Activated T-helper 1 cell treated with anti-CD3 and anti-CD28 coated beads, Interleukin-12 subunit alpha, Interleukin-12 subunit beta, Interleukin-2, Interleukin-4 antibody, amounts not matched to agents 30 ng/mL and 10 ng/mL and 1 ng/mL, durations not matched to agents 14 hours and 24 hours and 36 hours (primary cell): ENCODE measurements at regions of chr5 and their contacts with region 1.

Region 1: DNA sequence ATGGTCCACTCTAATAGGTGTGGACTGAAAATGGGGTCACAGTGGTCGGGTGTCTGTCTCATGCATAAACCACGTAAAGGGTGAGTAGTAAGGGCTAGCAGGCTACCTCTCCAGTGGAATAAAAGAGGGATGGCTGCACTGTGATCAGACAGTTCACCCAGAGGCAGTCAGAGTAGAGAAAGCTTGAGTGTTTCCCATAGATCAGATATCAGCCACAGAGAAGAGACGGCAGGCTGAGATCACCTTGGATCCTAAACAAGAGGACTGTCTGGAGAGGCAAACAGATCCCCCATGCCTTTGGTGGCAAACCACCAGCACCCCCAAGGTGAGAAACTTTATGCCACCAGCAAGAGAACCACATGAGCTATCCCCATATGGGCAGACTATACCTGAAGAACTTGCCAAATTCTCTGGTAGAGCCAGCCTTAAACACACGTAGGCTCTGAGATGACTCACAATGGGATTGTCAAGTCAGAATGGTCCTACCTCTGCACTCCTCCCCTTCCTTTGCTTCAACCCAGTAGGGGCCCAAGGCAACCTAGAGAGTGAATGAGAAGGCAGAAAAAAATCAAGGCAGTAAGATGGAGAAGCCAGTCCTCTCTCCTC is 205.2 kb upstream of the MAP3K1 start:
- DNase-seq: peak; percentile 49
- H3K4me3 Mint-ChIP-seq: peak overlapping the region; percentile 48
- H3K27ac Mint-ChIP-seq: peak overlapping the region; percentile 81
- H3K4me1 Mint-ChIP-seq: peaks cover 89% of the 10 kb centered on the region
- H3K27me3 Mint-ChIP-seq: peaks cover 3% of the 10 kb centered on the region

Region 2: DNA sequence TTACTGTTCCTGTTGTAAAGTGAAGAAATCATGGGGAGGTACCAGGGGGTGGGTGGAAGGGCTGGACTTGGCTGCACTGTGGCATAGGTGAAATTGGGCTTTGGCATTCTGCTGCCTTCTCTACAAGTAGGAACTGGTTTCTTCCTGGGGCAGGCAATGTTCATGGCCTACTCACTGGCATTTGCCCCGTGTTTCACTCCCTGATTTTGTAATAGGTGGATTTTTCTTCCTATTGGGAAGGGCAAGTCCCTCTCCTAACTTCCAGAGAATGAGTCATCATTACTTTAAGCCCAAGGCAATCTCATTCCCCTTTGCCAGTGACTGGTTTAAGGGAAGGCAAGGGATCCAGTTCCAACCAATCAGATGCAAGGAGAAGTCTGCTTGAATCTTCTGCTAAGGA is 309.2 kb before region 1 on chr5:
- intact Hi-C with region 1: no loop called
- DNase-seq: no peak
- H3K4me3 Mint-ChIP-seq: no peak overlapping the region
- H3K27ac Mint-ChIP-seq: no peak overlapping the region
- H3K4me1 Mint-ChIP-seq: no peaks in the 10 kb centered on the region
- H3K27me3 Mint-ChIP-seq: no peaks in the 10 kb centered on the region

Region 3: DNA sequence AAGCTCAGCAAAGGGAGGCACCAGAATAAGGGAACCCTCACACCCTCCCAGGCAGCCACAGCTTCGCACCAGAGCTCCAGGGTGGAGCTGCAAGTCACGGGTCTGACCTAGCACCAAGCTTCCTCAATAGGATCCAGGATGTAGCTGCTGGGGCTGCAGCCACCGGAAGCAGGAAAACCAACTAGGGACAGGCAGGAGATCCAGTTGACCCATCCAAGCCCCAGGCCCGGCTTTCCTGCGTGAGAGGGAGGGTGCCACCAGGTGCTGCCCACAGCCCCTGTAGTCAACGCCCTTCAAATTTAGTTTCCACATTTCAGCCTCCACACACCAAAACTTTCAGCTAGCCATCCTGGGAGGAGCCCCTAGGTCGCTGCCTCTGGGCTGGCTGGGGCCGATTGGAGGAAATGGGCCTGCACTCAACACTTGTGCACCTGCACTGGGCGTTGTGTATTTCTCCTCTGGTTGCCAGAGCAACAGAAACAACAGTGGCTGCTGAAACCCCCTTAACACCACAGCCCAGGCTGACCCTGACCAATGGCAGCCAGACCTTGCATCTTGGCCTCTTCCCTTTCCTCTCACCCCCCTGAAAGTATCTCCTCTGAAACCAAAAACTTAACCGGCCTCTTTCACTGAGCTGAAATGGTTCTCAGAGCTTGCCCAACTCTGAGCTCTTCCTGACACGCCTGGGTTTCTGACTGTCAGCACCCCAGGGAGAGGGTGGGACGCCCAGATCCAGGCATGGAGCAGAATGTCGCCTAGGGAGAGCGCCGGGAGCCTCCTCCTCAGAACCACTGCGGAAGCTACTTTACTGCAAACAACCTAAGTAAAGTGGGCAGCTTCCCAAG is 21.3 kb before region 1 on chr5:
- intact Hi-C with region 1: loop called (anchors 1 kb)
- DNase-seq: peak; percentile 65
- H3K4me3 Mint-ChIP-seq: peak overlapping the region; percentile 19
- H3K27ac Mint-ChIP-seq: peak overlapping the region; percentile 78
- H3K4me1 Mint-ChIP-seq: peaks cover 50% of the 10 kb centered on the region
- H3K27me3 Mint-ChIP-seq: peaks cover 7% of the 10 kb centered on the region

Region 4: DNA sequence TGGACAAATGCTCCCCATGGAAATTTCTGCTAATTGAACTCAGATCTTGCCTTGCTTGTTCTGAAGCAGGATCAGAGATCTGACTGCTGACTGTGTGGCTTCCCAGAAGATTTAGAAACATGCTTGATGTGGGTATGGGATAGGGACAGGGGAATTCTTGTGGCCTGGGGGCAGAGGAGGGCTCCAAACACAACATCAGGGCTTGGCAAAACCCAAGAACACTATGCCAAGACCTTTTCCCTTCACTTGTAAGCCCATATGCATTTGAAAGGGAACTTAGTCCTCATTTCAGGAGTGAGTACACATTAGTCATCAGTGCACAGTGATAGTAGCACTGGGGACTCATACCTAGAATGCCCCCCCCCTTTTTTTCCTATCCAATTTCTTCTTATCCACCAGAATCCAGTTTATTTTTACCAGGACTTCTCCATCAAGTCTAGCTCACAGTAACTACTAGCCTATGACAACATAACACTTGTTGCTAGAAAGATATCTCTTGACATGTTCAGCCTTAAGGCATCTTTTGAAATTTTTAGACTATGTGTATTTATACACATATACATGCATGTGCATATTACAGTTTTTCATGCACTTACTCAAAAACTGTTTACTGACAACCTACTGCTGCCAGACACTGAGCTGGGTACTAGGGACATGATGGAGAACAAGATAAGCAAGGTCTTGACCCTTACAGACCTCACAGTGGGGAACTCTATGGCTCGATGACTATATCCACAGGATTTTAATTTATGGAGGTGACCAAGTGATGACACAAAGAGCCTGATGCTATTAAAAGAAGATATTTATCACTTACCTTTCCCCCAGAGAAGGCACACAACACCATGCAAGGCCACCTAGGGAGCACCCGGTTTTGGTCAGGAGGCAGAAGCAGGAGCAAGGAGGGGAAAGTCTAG is 46.9 kb after region 1 on chr5:
- intact Hi-C with region 1: loop called (anchors 5 kb)
- DNase-seq: no peak
- H3K4me3 Mint-ChIP-seq: no peak overlapping the region
- H3K27ac Mint-ChIP-seq: no peak overlapping the region
- H3K4me1 Mint-ChIP-seq: peaks cover 10% of the 10 kb centered on the region
- H3K27me3 Mint-ChIP-seq: peaks cover 20% of the 10 kb centered on the region